AG04449 (cell line): ENCODE measurements at regions of chr6 and their contacts with region 1.

Region 1: GRCh38 chr6:139364302-139364981 is 10.0 kb downstream of the CITED2 start:
- DNase-seq: no peak
- H3K4me3 ChIP-seq: no peak overlapping the region
- CTCF ChIP-seq: peak; percentile 16

Region 2: GRCh38 chr6:138817822-138818308 is 546.6 kb before region 1 on chr6:
- CTCF ChIA-PET with region 1: interaction called, 60 read pairs
- POLR2A ChIA-PET with region 1: no interaction called
- DNase-seq: peak; percentile 51
- H3K4me3 ChIP-seq: no peak overlapping the region
- CTCF ChIP-seq: no peak

Region 3: GRCh38 chr6:139124887-139125672 is 239.4 kb before region 1 on chr6:
- CTCF ChIA-PET with region 1: interaction called, 26 read pairs
- POLR2A ChIA-PET with region 1: no interaction called
- DNase-seq: no peak
- H3K4me3 ChIP-seq: no peak overlapping the region
- CTCF ChIP-seq: peak; percentile 34

Region 4: GRCh38 chr6:139219271-139219729 is 145.1 kb before region 1 on chr6:
- CTCF ChIA-PET with region 1: interaction called, 118 read pairs
- POLR2A ChIA-PET with region 1: interaction called, 7 read pairs
- DNase-seq: peak; percentile 82
- H3K4me3 ChIP-seq: no peak overlapping the region
- CTCF ChIP-seq: peak; percentile 94

Region 5: GRCh38 chr6:139230391-139230840 is 134.0 kb before region 1 on chr6:
- CTCF ChIA-PET with region 1: interaction called, 20 read pairs
- POLR2A ChIA-PET with region 1: no interaction called
- DNase-seq: peak; percentile 4
- H3K4me3 ChIP-seq: no peak overlapping the region
- CTCF ChIP-seq: no peak